Activated CD4-positive, alpha-beta T cell treated with anti-CD3 and anti-CD28 coated beads for 36 hours (primary cell): ENCODE measurements at regions of chr19 and their contacts with region 1.

Region 1: DNA sequence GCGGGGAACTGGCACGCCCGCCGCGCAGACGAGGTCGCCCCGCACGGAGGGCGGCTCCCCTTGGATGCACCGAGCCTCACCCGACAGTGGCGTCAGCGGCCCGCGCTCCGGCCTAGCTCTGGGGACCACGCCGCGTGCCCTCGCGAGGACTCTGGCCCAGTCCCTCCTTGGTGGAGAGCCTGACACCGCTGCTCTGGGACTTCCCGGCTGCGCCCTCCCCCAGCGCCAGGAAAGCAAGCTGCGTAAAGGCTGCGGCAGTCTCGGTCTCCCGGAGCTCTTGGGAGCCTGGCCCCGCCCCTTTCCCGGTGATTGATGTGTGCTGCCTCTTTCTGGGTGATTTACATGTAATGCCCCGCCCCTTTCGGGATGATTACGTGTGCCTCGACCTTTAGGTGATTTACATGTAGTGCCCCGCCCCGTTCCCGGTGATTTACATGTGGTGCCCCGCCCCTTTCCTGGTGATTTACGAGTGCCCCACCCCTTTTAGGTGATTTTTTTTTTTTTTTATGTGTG is at the start of gene LENG9:
- DNase-seq: peak; percentile 100
- ATAC-seq: peak; percentile 69
- H3K4me3 Mint-ChIP-seq: peak within 1 kb of the TSS; percentile 80
- H3K27ac Mint-ChIP-seq: peak within 1 kb of the TSS; percentile 91
- H3K4me1 Mint-ChIP-seq: peaks cover 26% of the 10 kb centered on the region
- H3K27me3 Mint-ChIP-seq: peaks cover 6% of the 10 kb centered on the region
- total RNA-seq, gene LENG9: 5.0 to 5.1 TPM

Region 2: DNA sequence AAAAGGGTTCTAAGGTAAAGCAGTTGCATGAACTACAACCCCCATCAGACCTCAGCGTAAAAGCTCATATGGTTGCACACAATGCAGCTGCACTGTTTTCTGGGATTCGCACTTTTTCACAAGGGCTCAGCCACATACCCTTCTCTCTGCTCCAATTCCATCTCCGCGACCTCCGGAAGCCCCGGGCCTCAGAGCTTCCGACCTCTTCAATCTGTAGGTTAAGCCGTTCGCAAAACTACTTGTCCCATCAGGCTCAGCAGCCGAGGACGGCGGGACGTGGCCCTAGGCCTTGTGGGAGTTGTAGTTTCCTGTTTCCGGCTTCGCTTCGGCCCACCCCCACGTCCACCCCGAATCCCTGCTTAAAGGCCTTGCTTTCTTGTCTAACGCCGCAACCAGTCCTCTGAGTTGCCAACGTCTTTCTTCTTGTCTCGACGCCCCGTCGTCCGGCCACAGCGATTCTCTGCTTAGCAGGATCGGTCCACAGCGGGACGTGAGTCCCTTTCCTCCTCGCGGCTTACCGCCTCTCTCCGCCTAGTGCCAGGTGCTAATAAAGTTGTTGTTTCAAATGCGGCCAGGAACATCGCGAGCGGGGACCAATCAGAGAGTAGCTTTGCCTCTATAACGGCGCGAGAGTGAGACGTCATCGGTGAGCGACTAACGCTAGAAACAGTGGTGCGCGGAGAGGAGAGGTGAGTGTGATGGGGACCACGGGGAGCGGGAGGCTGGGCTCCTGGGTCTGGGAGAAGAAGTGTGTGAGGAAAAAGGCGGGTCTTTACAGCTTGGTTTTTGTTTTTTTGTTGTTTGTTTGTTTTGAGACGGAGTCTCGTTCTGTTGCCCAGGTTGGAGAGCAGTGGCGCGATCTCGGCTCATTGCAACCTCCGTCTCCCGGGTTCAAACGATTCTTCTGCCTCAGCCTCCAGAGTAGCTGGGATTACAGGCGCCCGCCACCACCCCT is 348.2 kb before region 1 on chr19 and contains the starts of genes PRPF31 and TFPT:
- CTCF ChIA-PET with region 1: no interaction called
- POLR2A ChIA-PET with region 1: interaction called, 8 read pairs
- intact Hi-C with region 1: loop called in 1 of 2 experiments (anchors 1 kb)
- DNase-seq: peak; percentile 97
- ATAC-seq: peak; percentile 94
- H3K4me3 Mint-ChIP-seq: peak within 1 kb of the TSS; percentile 83
- H3K27ac Mint-ChIP-seq: peak within 1 kb of the TSS; percentile 96
- H3K4me1 Mint-ChIP-seq: peaks cover 25% of the 10 kb centered on the region
- H3K27me3 Mint-ChIP-seq: no peaks in the 10 kb centered on the region
- total RNA-seq, gene PRPF31: 85.5 to 115 TPM
- total RNA-seq, gene TFPT: 28.5 to 39.3 TPM

Region 3: DNA sequence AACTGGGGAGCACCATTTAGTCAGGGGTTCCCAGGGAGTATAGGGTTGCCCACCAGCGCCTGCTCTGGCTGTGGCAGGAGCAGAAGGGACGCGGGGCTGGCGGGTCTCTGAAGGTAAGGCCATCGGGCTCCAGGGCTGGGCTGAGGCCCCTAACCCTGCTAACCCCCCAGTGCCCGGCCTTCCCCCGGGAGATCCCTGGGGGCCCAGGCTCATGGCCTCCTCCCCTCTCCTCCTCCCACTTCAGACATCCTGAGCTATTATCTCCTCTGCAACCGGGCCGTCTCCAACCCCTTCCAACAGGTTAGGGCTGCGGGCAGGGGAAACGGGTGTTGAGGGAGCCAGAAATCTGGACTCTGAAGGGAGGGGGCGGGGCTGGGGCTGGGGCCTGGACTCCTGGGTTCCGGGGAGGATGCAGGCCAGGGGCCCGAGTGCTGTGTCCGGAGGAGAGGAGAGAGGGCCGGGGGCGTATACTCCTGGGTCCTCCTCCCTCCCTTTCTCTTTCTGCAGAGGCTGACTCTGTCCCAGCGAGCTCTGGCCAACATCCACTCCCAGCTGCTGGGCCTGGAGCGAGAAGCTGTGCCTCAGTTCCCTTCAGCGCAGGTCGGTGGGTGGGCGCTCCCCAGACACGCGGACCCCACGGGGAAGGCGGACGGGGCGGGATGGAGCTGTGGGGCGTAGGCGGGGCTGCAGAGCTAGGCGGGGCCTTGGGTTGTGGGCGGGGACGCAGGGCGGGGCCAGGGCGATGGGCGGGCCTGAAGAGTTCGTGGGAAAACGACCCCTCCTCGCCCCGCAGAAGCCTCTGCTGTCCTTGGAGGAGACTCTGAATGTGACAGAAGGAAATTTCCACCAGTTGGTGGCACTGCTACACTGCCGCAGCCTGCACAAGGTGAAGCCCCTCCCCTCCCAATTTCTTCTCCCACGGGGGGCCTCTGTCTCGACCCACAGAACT is 33.0 kb before region 1 on chr19:
- CTCF ChIA-PET with region 1: interaction called, 4 read pairs
- POLR2A ChIA-PET with region 1: no interaction called
- intact Hi-C with region 1: loop called in 1 of 2 experiments (anchors 1 kb)
- DNase-seq: peak; percentile 73
- ATAC-seq: peak; percentile 77
- H3K4me3 Mint-ChIP-seq: no peak overlapping the region
- H3K27ac Mint-ChIP-seq: no peak overlapping the region
- H3K4me1 Mint-ChIP-seq: peaks cover 10% of the 10 kb centered on the region
- H3K27me3 Mint-ChIP-seq: peaks cover 16% of the 10 kb centered on the region

Region 4: DNA sequence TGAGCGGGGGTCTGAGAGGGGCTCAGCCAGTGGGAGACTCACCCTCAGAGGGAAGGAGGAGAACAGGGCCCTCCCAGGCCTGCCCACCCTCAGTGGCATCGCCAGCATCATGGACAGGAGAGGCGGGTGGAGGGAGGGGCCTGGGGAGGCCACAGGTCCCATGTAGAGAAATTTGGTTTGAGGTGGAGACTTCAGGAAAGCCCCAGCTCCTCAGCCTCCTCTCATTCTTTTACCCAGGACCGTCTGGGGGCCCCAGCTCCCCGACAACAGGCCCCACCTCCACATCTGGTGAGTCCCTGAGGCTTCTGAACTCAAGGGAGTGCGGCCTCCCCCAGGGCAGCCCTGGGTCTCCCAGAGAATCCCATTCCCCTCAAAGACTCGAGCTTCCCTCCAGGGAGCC is 169.8 kb after region 1 on chr19:
- CTCF ChIA-PET with region 1: no interaction called
- POLR2A ChIA-PET with region 1: no interaction called
- intact Hi-C with region 1: no loop called
- DNase-seq: no peak
- ATAC-seq: no peak
- H3K4me3 Mint-ChIP-seq: no peak overlapping the region
- H3K27ac Mint-ChIP-seq: no peak overlapping the region
- H3K4me1 Mint-ChIP-seq: no peaks in the 10 kb centered on the region
- H3K27me3 Mint-ChIP-seq: peaks cover 12% of the 10 kb centered on the region

Region 5: GRCh38 chr19:55166530-55167268 is 703.1 kb after region 1 on chr19 and contains the start of gene DNAAF3:
- CTCF ChIA-PET with region 1: no interaction called
- POLR2A ChIA-PET with region 1: no interaction called
- intact Hi-C with region 1: loop called in 1 of 2 experiments (anchors 10 kb)
- DNase-seq: peak; percentile 95
- ATAC-seq: peak; percentile 95
- H3K4me3 Mint-ChIP-seq: peak within 1 kb of the TSS; percentile 71
- H3K27ac Mint-ChIP-seq: peak within 1 kb of the TSS; percentile 11
- H3K4me1 Mint-ChIP-seq: peaks cover 10% of the 10 kb centered on the region
- H3K27me3 Mint-ChIP-seq: peaks cover 45% of the 10 kb centered on the region
- total RNA-seq, gene DNAAF3: 0.53 to 0.72 TPM

Region 6: DNA sequence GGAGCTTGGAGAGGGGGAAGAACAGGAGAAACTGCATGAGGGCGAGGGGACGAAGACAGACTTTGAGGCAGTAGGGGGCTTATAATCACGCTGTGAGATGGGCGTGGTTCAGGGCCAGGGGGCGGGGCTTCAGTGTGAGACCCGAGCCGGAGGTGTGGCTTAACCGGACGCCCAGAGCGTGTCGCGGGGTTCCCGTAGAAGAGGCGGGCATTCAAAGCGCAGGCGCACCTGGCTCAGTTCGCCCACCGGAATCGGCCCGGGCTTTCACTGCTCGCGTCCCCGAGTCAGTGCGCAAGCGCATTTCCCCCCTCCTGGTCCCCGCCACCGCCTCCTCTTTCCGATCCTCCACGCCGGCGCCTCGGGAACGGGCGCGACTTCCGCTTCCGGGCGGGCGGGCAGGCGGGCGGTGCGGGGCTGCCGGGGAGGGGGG is 1141.6 kb after region 1 on chr19:
- CTCF ChIA-PET with region 1: no interaction called
- POLR2A ChIA-PET with region 1: no interaction called
- intact Hi-C with region 1: loop called in 1 of 2 experiments (anchors 1 kb)
- DNase-seq: peak; percentile 100
- ATAC-seq: peak; percentile 87
- H3K4me3 Mint-ChIP-seq: peak overlapping the region; percentile 88
- H3K27ac Mint-ChIP-seq: peak overlapping the region; percentile 96
- H3K4me1 Mint-ChIP-seq: peaks cover 57% of the 10 kb centered on the region
- H3K27me3 Mint-ChIP-seq: no peaks in the 10 kb centered on the region